PC-9 (cell line): ENCODE measurements at regions of chr16 and their contacts with region 1.

Region 1: GRCh38 chr16:81585785-81586184 is 141.2 kb downstream of the CMIP start:
- DNase-seq: peak in 1 of 2 experiments; percentile 32
- H3K4me3 ChIP-seq: no peak overlapping the region
- H3K27ac ChIP-seq: peak overlapping the region; percentile 68
- H3K4me1 ChIP-seq: peaks cover 62% of the 10 kb centered on the region
- H3K27me3 ChIP-seq: no peaks in the 10 kb centered on the region
- CTCF ChIP-seq: peak; percentile 52

Region 2: DNA sequence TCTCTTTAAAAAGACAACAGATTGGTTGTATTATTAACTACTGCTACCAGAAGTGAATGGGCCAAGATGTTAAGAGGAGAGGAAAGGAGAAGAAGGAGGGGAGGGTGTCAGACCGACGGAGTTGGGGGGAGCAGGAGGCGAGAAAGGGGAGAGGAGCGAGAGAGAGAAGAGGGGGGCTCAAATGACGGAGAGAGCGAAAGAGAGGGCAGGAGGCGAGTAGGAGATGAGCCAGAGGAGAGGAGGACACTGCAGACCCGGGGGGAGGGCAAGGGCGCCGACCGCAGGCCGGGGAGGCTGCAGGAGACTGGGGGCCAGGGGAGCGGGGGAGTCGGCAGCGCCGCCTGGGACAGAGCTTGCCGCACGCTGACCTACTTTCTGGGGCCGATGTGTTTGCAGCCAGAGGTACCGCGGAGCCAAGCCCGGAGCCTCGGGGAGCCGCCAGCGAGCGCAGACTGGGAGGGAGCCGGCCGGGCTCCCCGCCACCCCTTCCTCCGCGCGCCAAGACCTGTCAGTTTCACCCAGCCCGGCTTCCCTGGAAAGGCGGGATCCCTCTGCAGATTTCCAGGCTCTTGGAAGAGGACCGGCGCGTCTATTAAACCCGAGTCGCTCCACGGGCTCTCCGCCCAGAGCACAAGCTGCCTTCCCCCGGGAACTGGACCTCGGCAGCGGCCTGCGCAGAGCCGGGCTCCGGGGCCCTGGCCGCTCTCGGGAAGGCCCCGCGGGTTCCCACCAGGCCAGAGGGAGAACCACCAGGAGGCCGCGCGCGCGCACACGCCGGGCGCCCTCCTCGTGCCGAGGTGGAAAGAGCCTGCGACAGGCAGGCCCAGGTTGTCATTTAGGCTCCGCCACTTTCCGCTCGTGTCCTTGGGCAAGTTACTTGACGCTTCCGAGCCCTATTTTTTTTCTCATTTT is 653.7 kb before region 1 on chr16:
- CTCF ChIA-PET with region 1: no interaction called
- POLR2A ChIA-PET with region 1: no interaction called
- intact Hi-C with region 1: no loop called
- DNase-seq: peak in 1 of 2 experiments; percentile 25
- H3K4me3 ChIP-seq: peak overlapping the region; percentile 40; the same call in 1 of the 2 replicates
- H3K27ac ChIP-seq: no peak overlapping the region
- H3K4me1 ChIP-seq: peaks cover 7% of the 10 kb centered on the region; the same call in 1 of the 2 replicates
- H3K27me3 ChIP-seq: peaks cover 53% of the 10 kb centered on the region
- CTCF ChIP-seq: no peak

Region 3: DNA sequence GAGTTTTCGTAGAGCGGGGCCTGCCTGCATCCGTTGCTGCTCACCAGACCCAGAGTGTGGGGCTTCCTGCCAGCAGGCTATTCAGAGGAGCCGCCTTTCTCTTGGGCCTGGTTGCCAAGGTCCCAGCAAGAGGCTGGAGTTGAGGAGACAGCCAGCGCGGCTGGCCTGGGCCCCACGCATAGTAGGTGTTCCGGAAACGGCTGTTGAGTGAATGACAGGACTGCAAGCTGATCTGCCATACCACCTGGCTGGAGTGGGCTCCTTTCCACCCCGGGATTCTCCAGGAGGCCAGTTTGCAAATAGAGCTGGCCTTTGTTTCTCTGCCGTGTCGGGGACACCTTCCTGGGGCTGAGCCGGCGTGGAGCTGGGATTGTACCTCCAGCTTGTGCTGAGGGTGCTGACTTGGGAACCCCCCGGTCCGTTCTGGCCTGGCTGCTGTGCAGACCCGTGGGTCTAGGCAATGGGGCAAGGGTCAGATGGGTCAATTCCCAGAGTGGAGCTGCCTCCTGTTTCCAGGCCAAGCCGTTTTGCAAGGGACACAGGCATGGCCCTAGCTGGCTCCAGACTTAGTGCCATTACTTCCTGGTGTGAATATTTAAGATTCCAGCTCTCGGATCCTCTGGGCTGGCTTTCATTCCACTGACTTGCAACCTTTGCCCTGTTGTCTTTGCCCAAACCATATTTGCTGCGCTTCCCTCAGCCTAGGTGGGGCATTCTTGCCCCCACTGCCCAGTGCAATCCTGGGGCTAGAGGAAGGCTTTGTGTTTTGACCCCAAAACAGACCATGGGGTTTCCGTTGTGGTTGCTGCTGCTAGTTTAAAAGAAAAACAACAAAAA is 72.4 kb before region 1 on chr16:
- CTCF ChIA-PET with region 1: no interaction called
- POLR2A ChIA-PET with region 1: no interaction called
- intact Hi-C with region 1: no loop called
- DNase-seq: peak; percentile 61 to 89
- H3K4me3 ChIP-seq: no peak overlapping the region
- H3K27ac ChIP-seq: peak overlapping the region; percentile 82
- H3K4me1 ChIP-seq: peaks cover 67% of the 10 kb centered on the region
- H3K27me3 ChIP-seq: no peaks in the 10 kb centered on the region
- CTCF ChIP-seq: no peak

Region 4: GRCh38 chr16:81551151-81551808 is 34.5 kb before region 1 on chr16:
- CTCF ChIA-PET with region 1: no interaction called
- POLR2A ChIA-PET with region 1: no interaction called
- intact Hi-C with region 1: no loop called
- DNase-seq: no peak
- H3K4me3 ChIP-seq: no peak overlapping the region
- H3K27ac ChIP-seq: no peak overlapping the region
- H3K4me1 ChIP-seq: no peaks in the 10 kb centered on the region
- H3K27me3 ChIP-seq: no peaks in the 10 kb centered on the region
- CTCF ChIP-seq: no peak

Region 5: DNA sequence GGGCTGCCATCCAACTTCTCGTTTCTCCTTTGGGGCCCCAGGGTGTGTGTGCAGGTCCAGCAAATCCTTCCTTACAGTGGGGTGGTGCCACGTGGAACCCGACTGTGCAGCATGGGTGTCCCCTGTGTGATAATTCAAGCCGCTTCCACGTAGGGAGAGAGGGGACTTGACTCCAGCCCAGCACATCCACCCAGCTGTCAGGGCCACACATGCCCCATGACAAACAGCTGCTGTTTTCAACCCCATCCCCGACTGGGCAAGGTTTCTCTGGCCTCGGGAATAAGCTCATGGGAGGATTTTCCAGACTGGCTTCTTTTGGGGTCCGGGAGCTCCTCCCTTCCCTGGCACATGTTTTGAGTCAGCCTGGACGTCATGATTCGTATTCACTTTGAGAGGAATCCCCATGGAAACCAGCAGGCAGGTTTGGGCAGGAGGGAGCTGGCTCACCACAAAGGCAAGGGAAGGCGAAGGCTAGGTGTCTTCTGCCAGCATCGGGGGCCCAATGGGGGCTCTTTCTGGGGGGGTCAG is 15.2 kb after region 1 on chr16:
- CTCF ChIA-PET with region 1: interaction called, 5 read pairs
- POLR2A ChIA-PET with region 1: no interaction called
- intact Hi-C with region 1: loop called (anchors 1 kb)
- DNase-seq: peak in 1 of 2 experiments; percentile 53
- H3K4me3 ChIP-seq: no peak overlapping the region
- H3K27ac ChIP-seq: no peak overlapping the region
- H3K4me1 ChIP-seq: peaks cover 17% of the 10 kb centered on the region
- H3K27me3 ChIP-seq: no peaks in the 10 kb centered on the region
- CTCF ChIP-seq: no peak